Aorta (tissue), 5 donors: ENCODE measurements at regions of chr3 and their contacts with region 1.

Region 1: DNA sequence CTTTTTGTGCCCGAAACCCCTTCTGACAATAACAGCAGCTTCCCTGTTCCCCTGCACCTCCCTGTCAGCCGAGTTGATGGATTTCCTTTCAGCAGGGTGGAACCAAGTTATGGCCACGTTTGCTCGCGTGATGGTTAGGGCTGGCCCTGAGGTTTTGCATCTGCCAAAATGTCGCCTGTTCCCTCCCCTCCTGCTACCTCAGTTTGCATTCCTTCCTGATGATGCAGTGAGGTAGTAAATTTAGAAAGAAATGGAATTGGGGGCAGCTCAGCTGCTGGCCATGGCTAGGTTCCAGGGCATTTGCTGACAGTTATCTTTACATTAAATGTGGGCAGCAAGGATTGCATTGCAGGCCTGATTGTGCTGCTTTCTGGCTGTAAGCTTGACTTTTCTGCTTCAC is 13.2 kb downstream of the LIMD1 start:
- DNase-seq: no peak
- ATAC-seq: peak; percentile 61
- H3K4me3 ChIP-seq: no peak overlapping the region
- H3K27ac ChIP-seq: peak overlapping the region; percentile 63 to 96
- H3K4me1 ChIP-seq: peaks cover 3 to 24% of the 10 kb centered on the region in 2 donors
- H3K27me3 ChIP-seq: no peaks in the 10 kb centered on the region

Region 2: DNA sequence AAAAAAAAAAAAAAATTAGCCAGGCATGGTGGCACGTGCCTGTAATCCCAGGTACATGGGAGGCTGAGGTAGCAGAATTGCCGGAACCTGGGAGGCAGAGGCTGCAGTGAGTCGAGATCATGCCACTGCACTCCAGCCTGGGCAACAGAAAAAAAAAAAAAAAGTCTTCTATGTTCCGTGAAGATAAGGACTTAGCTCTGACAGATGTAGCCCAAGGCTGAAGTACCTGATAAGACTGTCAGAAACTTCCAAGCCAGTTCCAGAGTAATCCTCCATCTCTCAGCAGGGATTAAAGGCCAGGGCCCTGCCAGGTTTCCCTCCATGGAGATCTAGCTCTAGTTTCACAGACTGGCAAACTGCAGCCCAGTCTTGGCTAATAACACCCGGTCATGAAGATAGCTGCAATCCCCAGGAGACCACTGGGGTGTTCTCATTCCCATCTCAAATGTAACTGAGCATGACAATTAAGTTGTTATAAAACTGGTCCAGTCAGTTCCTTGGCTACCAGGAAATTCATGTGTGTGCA is 470.1 kb before region 1 on chr3:
- intact Hi-C with region 1: loop called in 1 of 2 experiments (anchors 10 kb)
- DNase-seq: no peak
- ATAC-seq: no peak
- H3K4me3 ChIP-seq: no peak overlapping the region
- H3K27ac ChIP-seq: no peak overlapping the region
- H3K4me1 ChIP-seq: no peaks in the 10 kb centered on the region
- H3K27me3 ChIP-seq: no peaks in the 10 kb centered on the region

Region 3: GRCh38 chr3:45647148-45647619 is 39.4 kb after region 1 on chr3:
- intact Hi-C with region 1: loop called in 1 of 2 experiments (anchors 5 kb)
- DNase-seq: no peak
- ATAC-seq: peak; percentile 81
- H3K4me3 ChIP-seq: no peak overlapping the region
- H3K27ac ChIP-seq: peak overlapping the region in 1 of 2 donors; percentile 66
- H3K4me1 ChIP-seq: peaks cover 0 to 8% of the 10 kb centered on the region in 2 donors
- H3K27me3 ChIP-seq: no peaks in the 10 kb centered on the region